CD8-positive, alpha-beta T cell (primary cell): ENCODE measurements at regions of chr17 and their contacts with region 1.

Region 1: GRCh38 chr17:76191896-76192295 is 48.4 kb downstream of the RNF157 start:
- DNase-seq: peak in 5 of 9 experiments; percentile 32 to 89 (median 69)
- ATAC-seq: peak; percentile 80
- H3K4me3 ChIP-seq: peak overlapping the region; percentile 18 to 23
- H3K4me3 Mint-ChIP-seq: peak overlapping the region; percentile 65
- H3K27ac ChIP-seq: peak overlapping the region; percentile 59 to 60
- H3K27ac Mint-ChIP-seq: peak overlapping the region; percentile 94
- H3K4me1 ChIP-seq: peaks cover 93% of the 10 kb centered on the region
- H3K4me1 Mint-ChIP-seq: peaks cover 81% of the 10 kb centered on the region
- H3K27me3 ChIP-seq: no peaks in the 10 kb centered on the region
- H3K27me3 Mint-ChIP-seq: no peaks in the 10 kb centered on the region
- CTCF ChIP-seq: no peak

Region 2: GRCh38 chr17:76252040-76252954 is 60.4 kb after region 1 on chr17:
- CTCF ChIA-PET with region 1: interaction called, 5 read pairs
- POLR2A ChIA-PET with region 1: interaction called, 16 read pairs
- intact Hi-C with region 1: no loop called
- DNase-seq: peak in 3 of 9 experiments; percentile 48 to 74 (median 70)
- ATAC-seq: peak; percentile 47
- H3K4me3 ChIP-seq: peak overlapping the region in 1 of 2 experiments; percentile 12
- H3K4me3 Mint-ChIP-seq: peak overlapping the region; percentile 61
- H3K27ac ChIP-seq: peak overlapping the region; percentile 7 to 74
- H3K27ac Mint-ChIP-seq: peak overlapping the region; percentile 96
- H3K4me1 ChIP-seq: peaks cover 44% of the 10 kb centered on the region
- H3K4me1 Mint-ChIP-seq: peaks cover 60% of the 10 kb centered on the region
- H3K27me3 ChIP-seq: no peaks in the 10 kb centered on the region
- H3K27me3 Mint-ChIP-seq: no peaks in the 10 kb centered on the region
- CTCF ChIP-seq: no peak